HCT116 (cell line): ENCODE measurements at regions of chr9 and their contacts with region 1.

Region 1: DNA sequence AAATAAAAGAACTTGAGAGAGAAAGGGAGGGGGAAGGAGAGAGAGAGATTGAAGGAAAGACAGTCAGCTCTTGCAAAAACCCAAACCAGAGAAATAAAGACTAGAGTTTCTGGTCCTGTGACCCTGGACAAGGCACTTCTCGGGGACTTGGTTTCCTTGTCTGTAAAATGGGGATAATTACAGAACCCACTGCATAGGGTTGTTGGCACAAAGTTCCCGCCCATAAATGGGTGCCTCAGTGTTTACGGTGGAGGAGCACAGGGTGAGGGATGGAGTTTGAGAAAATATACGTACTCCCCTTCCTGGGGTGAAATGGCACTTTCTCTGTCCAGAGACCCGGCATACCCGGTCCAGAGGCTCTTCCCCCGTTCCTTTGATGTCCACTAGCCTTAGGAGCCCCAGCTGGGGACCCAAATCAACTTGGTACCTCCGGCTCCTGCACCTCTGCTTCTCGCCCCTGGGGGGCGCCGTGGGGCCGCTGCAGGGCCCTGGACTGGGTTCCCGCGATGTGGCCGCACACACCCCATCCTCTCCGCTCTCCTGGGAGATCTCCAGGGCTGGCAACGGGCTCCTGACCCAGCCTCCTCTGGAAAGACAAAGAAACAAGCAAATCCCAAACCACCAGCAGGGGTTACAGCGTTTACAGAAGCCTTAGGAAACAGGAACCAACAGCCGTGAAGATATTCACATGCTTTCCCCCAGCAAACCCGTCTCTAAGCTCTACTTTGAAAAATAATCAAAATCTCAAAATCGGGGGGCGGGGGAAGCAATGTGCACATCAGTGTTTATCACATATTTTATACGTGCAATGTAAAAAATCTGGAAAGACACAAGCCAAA is 26.3 kb downstream of the PTGES start:
- DNase-seq: peak; percentile 64
- ATAC-seq: peak; percentile 99
- H3K4me3 ChIP-seq: peak overlapping the region; percentile 11 to 33; a peak in 2 of 4 replicates
- H3K27ac ChIP-seq: peak overlapping the region; percentile 0; the same call in 1 of the 2 replicates
- H3K4me1 ChIP-seq: peaks cover 0 to 10% of the 10 kb centered on the region in 2 experiments; a peak in 3 of 4 replicates
- H3K27me3 ChIP-seq: no peaks in the 10 kb centered on the region
- CTCF ChIP-seq: peak; percentile 94 to 98 (median 96)
- POLR2A ChIP-seq: no peak
- RAD21 ChIP-seq: peak; percentile 94

Region 2: DNA sequence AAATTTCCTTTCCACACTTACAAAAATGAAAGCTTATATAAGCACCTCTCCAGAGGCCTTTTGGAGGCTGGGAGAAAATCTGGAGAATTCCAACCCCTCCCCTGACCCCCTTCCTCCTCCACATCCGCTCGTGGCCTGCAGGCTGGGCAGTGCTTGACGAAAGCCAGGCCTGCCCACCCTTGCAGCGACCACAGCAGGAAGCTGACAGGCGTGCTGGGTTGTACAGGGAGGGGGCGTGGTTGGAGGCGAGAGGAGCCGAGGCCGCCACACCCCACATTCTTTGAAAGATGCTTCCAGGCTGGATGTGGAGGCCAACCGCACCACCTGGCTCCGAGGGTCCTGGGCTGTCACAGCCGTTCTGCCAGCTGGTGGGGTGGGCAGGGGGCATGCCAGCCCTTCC is 500.7 kb before region 1 on chr9:
- CTCF ChIA-PET with region 1: no interaction called
- POLR2A ChIA-PET with region 1: no interaction called
- RAD21 ChIA-PET with region 1: no interaction called
- intact Hi-C with region 1: no loop called
- DNase-seq: no peak
- ATAC-seq: peak; percentile 95
- H3K4me3 ChIP-seq: peak overlapping the region; percentile 11 to 35; a peak in 2 of 4 replicates
- H3K27ac ChIP-seq: peak overlapping the region; percentile 46
- H3K4me1 ChIP-seq: peaks cover 12 to 33% of the 10 kb centered on the region in 2 experiments
- H3K27me3 ChIP-seq: no peaks in the 10 kb centered on the region
- CTCF ChIP-seq: no peak
- POLR2A ChIP-seq: no peak
- RAD21 ChIP-seq: no peak; the same call in 1 of the 2 replicates

Region 3: DNA sequence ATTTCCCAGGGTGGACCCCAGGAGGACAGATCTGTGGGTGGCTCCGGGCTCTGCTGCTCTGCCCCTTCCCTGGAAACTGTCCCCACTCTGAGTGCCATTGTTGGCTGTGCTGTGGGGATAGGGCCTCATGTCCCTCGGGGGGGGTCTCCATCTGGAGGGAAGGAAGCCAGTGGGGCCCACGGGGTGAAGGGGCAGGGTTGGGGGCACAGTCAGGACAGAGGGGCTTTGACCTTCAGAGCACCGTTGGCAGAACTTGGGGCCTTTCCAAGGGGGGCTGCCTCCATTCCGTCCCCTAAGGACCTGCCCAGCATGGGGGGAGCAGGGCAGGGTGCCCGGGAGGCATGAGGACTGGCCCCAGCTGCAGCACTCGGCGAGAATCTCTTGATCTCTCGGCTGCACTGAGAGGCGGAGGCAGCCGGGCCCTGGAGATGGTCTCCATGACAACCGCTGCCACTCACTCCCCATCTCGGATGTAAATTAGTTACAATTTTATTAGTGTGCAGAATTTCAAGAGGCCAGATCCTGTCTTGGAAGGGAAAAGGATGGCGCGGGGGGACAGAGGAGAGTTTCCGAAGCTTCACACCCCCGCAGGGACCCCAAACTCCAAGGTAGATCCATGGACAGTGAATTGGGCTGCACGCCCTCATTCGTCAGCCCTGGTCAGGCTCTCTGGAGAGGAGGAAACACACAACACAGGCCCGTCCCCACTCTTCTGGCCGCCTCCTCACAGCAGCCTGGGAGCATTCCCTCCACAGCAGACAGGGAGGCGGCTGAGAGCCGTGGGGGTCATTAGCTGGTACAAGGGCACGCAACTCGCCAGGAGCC is 332.3 kb before region 1 on chr9:
- CTCF ChIA-PET with region 1: no interaction called
- POLR2A ChIA-PET with region 1: no interaction called
- RAD21 ChIA-PET with region 1: no interaction called
- intact Hi-C with region 1: no loop called
- DNase-seq: no peak
- ATAC-seq: no peak
- H3K4me3 ChIP-seq: no peak overlapping the region
- H3K27ac ChIP-seq: no peak overlapping the region
- H3K4me1 ChIP-seq: peaks cover 0 to 11% of the 10 kb centered on the region in 2 experiments; a peak in 3 of 4 replicates
- H3K27me3 ChIP-seq: peaks cover 6% of the 10 kb centered on the region; the same call in 1 of the 2 replicates
- CTCF ChIP-seq: no peak
- POLR2A ChIP-seq: no peak
- RAD21 ChIP-seq: no peak

Region 4: GRCh38 chr9:129641746-129642513 is 84.6 kb before region 1 on chr9 and contains the start of gene ASB6:
- CTCF ChIA-PET with region 1: no interaction called
- POLR2A ChIA-PET with region 1: no interaction called
- RAD21 ChIA-PET with region 1: no interaction called
- intact Hi-C with region 1: loop called (anchors 5 kb)
- DNase-seq: peak; percentile 92
- ATAC-seq: peak; percentile 98
- H3K4me3 ChIP-seq: peak within 1 kb of the TSS; percentile 85 to 95
- H3K27ac ChIP-seq: peak within 1 kb of the TSS; percentile 74
- H3K4me1 ChIP-seq: peaks cover 10 to 17% of the 10 kb centered on the region in 2 experiments; a peak in 3 of 4 replicates
- H3K27me3 ChIP-seq: no peaks in the 10 kb centered on the region
- CTCF ChIP-seq: peak in 2 of 3 experiments; percentile 88 to 90; a peak in 4 of 6 replicates
- POLR2A ChIP-seq: peak; percentile 26
- RAD21 ChIP-seq: no peak
- total RNA-seq, gene ASB6: 21.6 TPM

Region 5: DNA sequence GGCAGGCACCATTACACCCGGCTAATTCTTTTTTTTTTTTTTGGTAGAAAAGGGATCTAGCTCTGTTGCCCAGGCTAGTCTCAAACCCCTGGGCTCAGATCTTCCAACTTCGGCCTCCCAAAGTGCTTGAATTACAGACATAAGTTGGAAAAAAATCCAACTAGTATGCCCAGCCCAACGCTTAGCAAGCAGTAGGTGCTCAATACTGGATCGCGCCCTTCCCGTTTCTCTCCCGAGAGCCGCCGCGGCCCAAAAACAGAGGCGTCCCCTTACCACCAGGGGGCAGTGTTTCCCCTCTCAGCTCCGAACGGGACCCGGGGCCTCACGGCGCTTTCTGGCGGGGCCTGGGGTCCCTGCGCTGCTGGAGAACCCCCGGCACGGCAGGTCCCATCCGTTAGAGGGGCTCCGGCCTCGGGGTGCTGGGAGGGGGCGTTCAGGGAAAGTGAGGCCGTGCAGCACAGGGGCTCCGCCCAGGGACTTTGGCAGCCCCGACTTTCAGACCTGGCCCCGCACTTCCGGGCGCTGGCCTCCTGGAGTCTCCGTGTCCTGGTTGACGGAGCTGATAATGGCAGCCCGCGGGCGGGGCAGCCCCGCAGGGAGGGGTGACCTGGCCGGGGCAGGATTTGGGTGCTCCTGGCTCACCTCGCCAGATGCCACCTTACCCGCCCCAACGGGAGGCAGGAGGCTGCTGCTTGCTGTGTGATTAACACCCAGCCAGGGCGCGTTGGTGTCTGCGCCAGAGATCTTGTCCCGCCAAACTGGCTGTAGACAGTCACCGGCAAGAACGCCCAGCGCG is 11.1 kb after region 1 on chr9:
- CTCF ChIA-PET with region 1: interaction called, 54 read pairs
- POLR2A ChIA-PET with region 1: interaction called, 8 read pairs
- RAD21 ChIA-PET with region 1: interaction called in 1 of 2 experiments, 4 read pairs
- intact Hi-C with region 1: no loop called
- DNase-seq: peak; percentile 51
- ATAC-seq: peak; percentile 90
- H3K4me3 ChIP-seq: peak overlapping the region; percentile 38 to 61
- H3K27ac ChIP-seq: peak overlapping the region; percentile 77
- H3K4me1 ChIP-seq: peaks cover 7 to 17% of the 10 kb centered on the region in 2 experiments; a peak in 3 of 4 replicates
- H3K27me3 ChIP-seq: no peaks in the 10 kb centered on the region
- CTCF ChIP-seq: peak; percentile 86 to 96 (median 92)
- POLR2A ChIP-seq: no peak
- RAD21 ChIP-seq: peak; percentile 98

Region 6: DNA sequence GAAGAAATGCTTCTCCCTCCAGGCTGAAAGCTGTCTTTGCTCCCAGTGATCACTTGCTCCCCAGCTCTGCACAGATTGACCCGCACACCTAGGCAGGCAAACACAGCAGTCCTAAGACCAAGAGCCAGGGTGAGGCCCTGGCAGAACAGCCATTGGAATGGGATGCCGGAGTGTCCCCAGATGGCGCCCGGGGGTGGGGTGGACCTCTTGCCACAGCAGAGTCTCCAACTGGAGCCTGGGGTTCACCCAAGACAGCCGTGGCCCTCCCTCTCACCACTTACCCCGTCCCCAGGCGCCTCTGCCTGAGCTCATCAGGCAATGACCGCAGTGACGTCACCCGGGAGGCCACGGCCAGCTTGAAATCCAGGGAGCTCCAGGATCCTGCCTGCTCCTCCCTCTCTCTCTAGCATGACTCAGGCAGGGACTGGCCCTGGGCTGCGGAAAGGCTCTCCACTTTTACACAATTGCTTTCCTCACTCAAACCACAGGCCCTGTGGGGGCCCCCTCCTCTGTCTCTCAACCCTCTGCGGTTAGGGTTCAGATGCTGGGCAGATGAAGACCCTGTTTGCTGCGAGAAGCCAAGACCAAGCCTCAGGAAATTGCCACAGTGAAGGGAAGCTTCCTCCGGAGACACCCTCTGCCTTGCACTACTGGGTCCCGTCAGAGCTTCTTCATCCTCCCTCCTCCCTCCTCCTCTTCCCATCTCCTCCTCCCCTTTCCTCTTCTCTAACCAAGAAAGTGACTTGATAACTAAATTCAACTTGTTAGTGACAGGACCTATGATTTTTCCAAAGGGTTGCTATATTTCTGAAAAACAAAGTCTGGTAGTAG is 50.6 kb after region 1 on chr9:
- CTCF ChIA-PET with region 1: interaction called, 13 read pairs
- POLR2A ChIA-PET with region 1: interaction called, 3 read pairs
- RAD21 ChIA-PET with region 1: interaction called in 1 of 2 experiments, 5 read pairs
- intact Hi-C with region 1: no loop called
- DNase-seq: peak; percentile 89
- ATAC-seq: peak; percentile 98
- H3K4me3 ChIP-seq: peak overlapping the region; percentile 47 to 57
- H3K27ac ChIP-seq: peak overlapping the region; percentile 71
- H3K4me1 ChIP-seq: peaks cover 26 to 29% of the 10 kb centered on the region in 2 experiments
- H3K27me3 ChIP-seq: no peaks in the 10 kb centered on the region
- CTCF ChIP-seq: no peak
- POLR2A ChIP-seq: no peak
- RAD21 ChIP-seq: no peak

Region 7: GRCh38 chr9:129783516-129784361 is 57.2 kb after region 1 on chr9:
- CTCF ChIA-PET with region 1: interaction called, 7 read pairs
- POLR2A ChIA-PET with region 1: interaction called, 3 read pairs
- RAD21 ChIA-PET with region 1: no interaction called
- intact Hi-C with region 1: loop called (anchors 1 kb)
- DNase-seq: peak; percentile 68
- ATAC-seq: peak; percentile 98
- H3K4me3 ChIP-seq: no peak overlapping the region
- H3K27ac ChIP-seq: no peak overlapping the region
- H3K4me1 ChIP-seq: peaks cover 4 to 7% of the 10 kb centered on the region in 2 experiments; a peak in 3 of 4 replicates
- H3K27me3 ChIP-seq: no peaks in the 10 kb centered on the region
- CTCF ChIP-seq: peak in 2 of 3 experiments; percentile 91 to 95; a peak in 4 of 6 replicates
- POLR2A ChIP-seq: no peak
- RAD21 ChIP-seq: no peak

Region 8: DNA sequence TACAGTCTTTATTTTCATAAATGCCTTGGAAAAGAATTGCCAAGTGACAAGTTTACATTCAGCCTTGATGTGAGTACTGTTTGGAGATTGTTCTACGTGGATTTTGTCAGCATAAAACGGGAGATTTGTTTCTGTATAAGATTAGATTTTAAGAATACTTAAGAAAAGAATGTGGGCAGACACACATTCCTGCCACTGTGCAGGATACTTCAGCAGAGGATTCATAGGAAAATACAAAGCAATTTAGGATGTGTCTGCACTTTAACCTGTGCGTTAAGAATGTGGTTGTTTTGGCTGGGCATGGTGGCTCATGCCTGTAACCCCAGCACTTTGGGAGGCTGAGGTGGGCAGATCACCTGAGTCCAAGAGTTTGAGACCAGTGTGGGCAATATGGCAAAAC is 364.4 kb after region 1 on chr9:
- CTCF ChIA-PET with region 1: no interaction called
- POLR2A ChIA-PET with region 1: no interaction called
- RAD21 ChIA-PET with region 1: no interaction called
- intact Hi-C with region 1: loop called (anchors 10 kb)
- DNase-seq: no peak
- ATAC-seq: no peak
- H3K4me3 ChIP-seq: no peak overlapping the region
- H3K27ac ChIP-seq: no peak overlapping the region
- H3K4me1 ChIP-seq: no peaks in the 10 kb centered on the region
- H3K27me3 ChIP-seq: no peaks in the 10 kb centered on the region
- CTCF ChIP-seq: peak in 2 of 3 experiments; percentile 12 to 20; a peak in 2 of 6 replicates
- POLR2A ChIP-seq: no peak
- RAD21 ChIP-seq: no peak